ENCODE measurements at regions of chr12 and their contacts with region 1.

Region 1: DNA sequence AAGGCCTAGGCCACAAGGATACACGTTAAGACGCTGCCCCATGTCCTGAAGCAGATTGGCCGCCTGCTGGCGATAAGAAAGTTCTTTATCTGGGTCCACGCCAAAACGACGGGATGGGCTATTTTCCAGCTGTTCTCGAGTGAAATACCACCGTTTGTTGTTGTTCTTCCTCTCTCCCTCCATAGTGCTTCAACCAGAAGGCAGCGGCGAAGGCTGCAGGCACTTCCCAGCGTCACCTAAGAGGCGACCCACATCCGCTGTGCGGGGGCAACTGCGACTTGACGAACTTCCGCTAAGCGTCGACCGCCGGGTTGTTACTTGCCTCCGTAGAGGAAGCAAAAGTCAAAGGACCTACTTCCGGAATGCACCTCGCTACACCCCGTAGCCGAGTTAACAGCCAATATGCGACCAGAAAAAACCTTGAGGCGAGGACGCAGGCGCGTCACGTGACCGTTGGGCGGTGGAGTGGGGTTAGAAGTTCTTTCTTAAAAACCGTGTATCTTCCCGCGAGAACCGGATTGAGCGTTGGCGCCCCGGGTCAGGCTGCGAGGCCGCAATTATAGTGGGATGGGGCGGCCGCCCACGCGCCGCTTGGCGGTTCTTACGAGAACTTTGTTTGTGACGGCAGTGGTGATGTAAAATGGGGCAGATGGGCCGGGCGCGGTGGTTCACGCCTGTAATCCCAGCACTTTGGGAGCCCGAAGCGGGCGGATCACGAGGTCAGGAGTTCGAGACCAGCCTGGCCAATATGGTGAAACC is at the start of gene CCNT1:
- DNase-seq: peak; percentile 92
- ATAC-seq: peak; percentile 91
- H3K4me3 Mint-ChIP-seq: peak within 1 kb of the TSS; percentile 87
- H3K27ac Mint-ChIP-seq: peak within 1 kb of the TSS; percentile 97
- H3K4me1 Mint-ChIP-seq: peaks cover 39% of the 10 kb centered on the region
- H3K27me3 Mint-ChIP-seq: peaks cover 2% of the 10 kb centered on the region
- CTCF ChIP-seq: no peak
- total RNA-seq, gene CCNT1: 48.9 and 49.6 TPM in 2 replicates

Region 2: DNA sequence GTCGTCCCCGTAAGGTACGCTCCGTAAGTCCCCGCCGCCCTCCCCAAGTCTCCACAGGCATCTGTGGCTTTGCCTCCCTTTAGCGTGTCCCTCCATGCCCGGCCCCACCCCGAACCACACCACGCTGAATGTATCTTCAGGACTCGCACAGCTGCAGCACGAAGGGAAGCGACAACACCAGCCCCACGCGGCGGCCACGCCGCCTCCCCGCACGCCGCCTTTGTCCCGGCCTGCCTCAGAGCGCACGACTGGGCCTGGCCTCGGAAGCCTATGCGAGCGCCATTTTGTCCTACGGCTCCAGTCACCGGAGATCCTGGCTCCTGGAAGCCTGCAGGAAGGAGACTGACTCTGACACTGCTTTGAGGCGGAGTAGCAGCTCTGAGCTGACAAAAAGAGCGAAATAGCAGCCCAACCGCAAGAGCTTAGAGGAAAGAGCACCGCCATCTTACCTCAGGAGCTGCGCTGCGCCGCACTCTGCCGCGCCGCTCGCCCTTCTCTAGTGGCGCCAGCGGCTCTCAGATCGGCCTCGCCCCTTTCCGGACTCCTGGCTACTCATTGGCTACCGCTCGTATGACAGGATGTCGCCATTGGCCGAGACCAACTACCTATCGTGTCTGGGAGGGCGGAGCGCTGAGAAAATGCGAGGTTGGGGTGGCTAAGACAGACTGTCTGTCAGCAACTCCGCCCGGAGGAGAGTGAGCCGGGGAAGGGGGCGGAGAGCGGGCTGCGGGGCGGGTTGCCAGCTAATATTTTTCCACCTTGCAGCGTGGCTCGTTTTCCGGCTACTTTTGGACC is 34.7 kb before region 1 on chr12 and contains the start of gene KANSL2:
- CTCF ChIA-PET with region 1: no interaction called
- POLR2A ChIA-PET with region 1: interaction called, 19 read pairs
- intact Hi-C with region 1: loop called (anchors 1 kb)
- DNase-seq: peak; percentile 84
- ATAC-seq: peak; percentile 98
- H3K4me3 Mint-ChIP-seq: peak within 1 kb of the TSS; percentile 97
- H3K27ac Mint-ChIP-seq: peak within 1 kb of the TSS; percentile 95
- H3K4me1 Mint-ChIP-seq: peaks cover 51% of the 10 kb centered on the region
- H3K27me3 Mint-ChIP-seq: no peaks in the 10 kb centered on the region
- CTCF ChIP-seq: no peak
- total RNA-seq, gene KANSL2: 52.4 and 59.5 TPM in 2 replicates

Region 3: GRCh38 chr12:48758737-48759136 is 42.1 kb after region 1 on chr12:
- CTCF ChIA-PET with region 1: no interaction called
- POLR2A ChIA-PET with region 1: no interaction called
- intact Hi-C with region 1: no loop called
- DNase-seq: no peak
- ATAC-seq: no peak
- H3K4me3 Mint-ChIP-seq: no peak overlapping the region
- H3K27ac Mint-ChIP-seq: no peak overlapping the region
- H3K4me1 Mint-ChIP-seq: no peaks in the 10 kb centered on the region
- H3K27me3 Mint-ChIP-seq: no peaks in the 10 kb centered on the region
- CTCF ChIP-seq: no peak

Measured in activated B cell treated with CpG ODN at 0.5 μM for 24 hours (primary cell).